Activated CD8-positive, alpha-beta T cell treated with anti-CD3 and anti-CD28 coated beads for 36 hours (primary cell): ENCODE measurements at regions of chr21 and their contacts with region 1.

Region 1: DNA sequence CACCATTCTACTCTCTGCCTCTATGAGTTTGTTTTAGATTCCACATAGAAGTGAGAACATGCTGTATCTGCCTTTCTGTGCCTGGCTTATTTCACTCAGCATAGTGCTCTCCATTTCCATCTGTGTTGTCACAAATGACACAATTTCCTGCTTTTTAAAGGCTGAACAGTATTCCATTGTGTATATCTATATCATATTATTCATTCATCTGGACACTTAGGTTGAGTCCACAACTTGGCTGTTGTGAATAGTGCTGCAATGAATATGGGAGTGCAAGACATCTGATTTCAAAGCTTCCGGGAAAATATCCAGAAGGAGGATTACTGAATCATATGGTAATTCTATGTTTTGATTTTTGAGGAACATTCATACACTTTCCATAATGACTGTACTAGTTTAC is 20.1 kb upstream of the DONSON start:
- DNase-seq: no peak
- ATAC-seq: no peak
- H3K4me3 Mint-ChIP-seq: no peak overlapping the region
- H3K27ac Mint-ChIP-seq: peak overlapping the region; percentile 9
- H3K4me1 Mint-ChIP-seq: peaks cover 4% of the 10 kb centered on the region
- H3K27me3 Mint-ChIP-seq: no peaks in the 10 kb centered on the region
- CTCF ChIP-seq: no peak

Region 2: DNA sequence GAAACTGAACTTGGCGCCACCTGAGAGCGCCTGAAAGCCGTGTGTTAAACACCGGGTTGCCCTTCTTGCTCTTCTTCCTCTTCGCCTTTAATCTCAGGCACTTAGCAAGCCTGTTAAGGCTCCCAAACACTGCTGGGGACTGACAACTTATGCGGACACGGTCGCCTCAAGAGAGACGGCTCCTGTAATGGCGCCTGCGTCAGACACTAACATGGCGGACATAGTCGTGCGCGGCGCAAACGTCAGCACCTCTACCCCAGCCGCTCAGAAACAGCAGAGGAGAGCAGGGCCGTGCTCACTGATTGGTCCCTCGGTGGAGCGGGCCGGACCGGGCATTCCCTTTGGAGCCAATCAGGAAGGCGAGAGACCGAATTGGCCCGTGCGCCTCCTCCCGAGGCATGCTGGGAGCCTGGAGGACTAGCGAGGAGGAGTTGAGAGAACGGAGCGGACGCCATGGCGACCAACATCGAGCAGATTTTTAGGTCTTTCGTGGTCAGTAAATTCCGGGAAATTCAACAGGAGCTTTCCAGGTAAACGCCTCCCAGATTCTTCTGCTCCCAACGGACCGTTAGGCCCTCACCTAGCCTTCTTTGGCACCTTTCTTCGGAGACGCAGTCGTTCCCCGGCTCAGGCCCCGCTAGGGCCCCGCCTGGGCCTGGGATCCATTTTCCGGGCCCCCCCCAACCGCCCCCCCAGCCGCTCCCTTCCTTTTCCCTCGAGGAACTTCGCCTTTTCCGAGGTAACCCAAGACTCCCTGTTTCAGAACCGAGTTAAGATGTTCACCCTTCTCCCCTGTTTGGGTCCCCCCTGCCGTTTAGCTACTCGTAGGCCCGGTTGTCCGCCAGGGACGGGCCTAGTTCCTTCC is 65.7 kb before region 1 on chr21 and contains the start of gene SON:
- CTCF ChIA-PET with region 1: interaction called, 12 read pairs
- POLR2A ChIA-PET with region 1: interaction called, 4 read pairs
- intact Hi-C with region 1: no loop called
- DNase-seq: peak; percentile 99
- ATAC-seq: peak; percentile 94
- H3K4me3 Mint-ChIP-seq: peak within 1 kb of the TSS; percentile 86
- H3K27ac Mint-ChIP-seq: peak within 1 kb of the TSS; percentile 100
- H3K4me1 Mint-ChIP-seq: peaks cover 36% of the 10 kb centered on the region
- H3K27me3 Mint-ChIP-seq: no peaks in the 10 kb centered on the region
- CTCF ChIP-seq: no peak
- total RNA-seq, gene SON: 267 to 276 TPM

Region 3: DNA sequence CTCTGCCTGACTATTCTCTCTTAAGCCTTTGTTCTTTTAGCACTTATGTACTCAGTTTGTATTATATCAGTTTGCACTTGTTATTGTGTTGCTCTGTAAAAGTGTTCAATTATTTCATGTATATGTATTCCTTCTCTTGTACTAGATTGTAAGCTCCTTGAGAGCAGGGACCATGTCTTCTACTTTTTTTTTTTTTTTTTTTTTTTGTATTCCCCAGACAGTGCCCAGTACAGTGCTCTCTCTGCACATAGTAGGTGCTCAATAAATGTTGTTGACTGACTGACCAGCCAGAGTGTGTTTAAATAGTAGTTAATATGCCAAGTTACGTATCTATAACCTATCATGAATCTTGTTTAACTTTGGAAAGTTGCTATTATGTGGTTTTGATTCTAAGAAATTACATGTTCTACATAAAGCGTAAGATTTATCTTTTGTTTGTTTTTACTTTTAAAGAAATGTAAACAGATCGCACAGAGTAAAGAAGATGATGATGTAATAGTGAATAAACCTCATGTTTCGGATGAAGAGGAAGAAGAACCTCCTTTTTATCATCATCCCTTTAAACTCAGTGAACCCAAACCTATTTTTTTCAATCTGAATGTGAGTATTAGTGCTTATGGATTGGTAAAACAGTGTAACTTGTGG is 49.7 kb before region 1 on chr21:
- CTCF ChIA-PET with region 1: interaction called, 17 read pairs
- POLR2A ChIA-PET with region 1: no interaction called
- intact Hi-C with region 1: no loop called
- DNase-seq: no peak
- ATAC-seq: no peak
- H3K4me3 Mint-ChIP-seq: no peak overlapping the region
- H3K27ac Mint-ChIP-seq: peak overlapping the region; percentile 25
- H3K4me1 Mint-ChIP-seq: peaks cover 62% of the 10 kb centered on the region
- H3K27me3 Mint-ChIP-seq: no peaks in the 10 kb centered on the region
- CTCF ChIP-seq: no peak

Region 4: DNA sequence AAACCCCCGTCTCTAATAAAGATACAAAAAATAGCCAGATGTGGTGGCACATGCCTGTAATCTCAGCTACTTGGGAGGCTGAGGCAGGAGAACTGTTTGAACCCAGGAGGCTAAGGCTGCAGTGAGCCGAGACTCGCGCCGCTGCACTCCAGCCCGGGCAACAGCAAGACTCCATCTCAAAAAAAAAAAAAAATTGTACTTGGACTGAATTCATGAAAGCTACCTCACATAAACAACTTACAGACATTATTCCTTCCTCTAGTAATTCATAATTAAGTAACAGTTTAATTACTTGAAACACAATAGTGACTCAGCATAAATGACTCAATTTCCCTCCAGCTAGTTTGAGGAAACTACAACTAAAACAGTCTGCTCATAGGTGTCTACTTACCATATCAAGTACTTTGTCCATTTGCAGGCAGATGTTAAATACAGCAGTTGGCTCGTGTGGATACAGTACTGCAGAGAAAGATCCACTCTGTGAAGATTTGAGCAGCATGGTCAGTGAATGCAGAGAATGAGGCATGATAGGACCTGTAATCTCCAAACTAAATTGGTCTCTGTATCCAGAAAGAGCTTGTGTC is 29.5 kb before region 1 on chr21:
- CTCF ChIA-PET with region 1: interaction called, 38 read pairs
- POLR2A ChIA-PET with region 1: no interaction called
- intact Hi-C with region 1: no loop called
- DNase-seq: no peak
- ATAC-seq: no peak
- H3K4me3 Mint-ChIP-seq: no peak overlapping the region
- H3K27ac Mint-ChIP-seq: peak overlapping the region; percentile 78
- H3K4me1 Mint-ChIP-seq: peaks cover 11% of the 10 kb centered on the region
- H3K27me3 Mint-ChIP-seq: no peaks in the 10 kb centered on the region
- CTCF ChIP-seq: no peak

Region 5: GRCh38 chr21:33598051-33598450 is 10.5 kb before region 1 on chr21:
- CTCF ChIA-PET with region 1: interaction called, 17 read pairs
- POLR2A ChIA-PET with region 1: interaction called, 3 read pairs
- intact Hi-C with region 1: no loop called
- DNase-seq: no peak
- ATAC-seq: no peak
- H3K4me3 Mint-ChIP-seq: no peak overlapping the region
- H3K27ac Mint-ChIP-seq: no peak overlapping the region
- H3K4me1 Mint-ChIP-seq: no peaks in the 10 kb centered on the region
- H3K27me3 Mint-ChIP-seq: no peaks in the 10 kb centered on the region
- CTCF ChIP-seq: no peak

Region 6: GRCh38 chr21:33641336-33642026 is 32.9 kb after region 1 on chr21 and contains the start of gene CRYZL1:
- CTCF ChIA-PET with region 1: interaction called, 13 read pairs
- POLR2A ChIA-PET with region 1: no interaction called
- intact Hi-C with region 1: no loop called
- DNase-seq: peak; percentile 100
- ATAC-seq: peak; percentile 85
- H3K4me3 Mint-ChIP-seq: peak within 1 kb of the TSS; percentile 81
- H3K27ac Mint-ChIP-seq: peak within 1 kb of the TSS; percentile 94
- H3K4me1 Mint-ChIP-seq: peaks cover 24% of the 10 kb centered on the region
- H3K27me3 Mint-ChIP-seq: peaks cover 17% of the 10 kb centered on the region
- CTCF ChIP-seq: no peak
- total RNA-seq, gene CRYZL1: 30.1 to 33.2 TPM